Left ventricle myocardium inferior (tissue), 1 donor: ENCODE measurements at regions of chr17 and their contacts with region 1.

Region 1: DNA sequence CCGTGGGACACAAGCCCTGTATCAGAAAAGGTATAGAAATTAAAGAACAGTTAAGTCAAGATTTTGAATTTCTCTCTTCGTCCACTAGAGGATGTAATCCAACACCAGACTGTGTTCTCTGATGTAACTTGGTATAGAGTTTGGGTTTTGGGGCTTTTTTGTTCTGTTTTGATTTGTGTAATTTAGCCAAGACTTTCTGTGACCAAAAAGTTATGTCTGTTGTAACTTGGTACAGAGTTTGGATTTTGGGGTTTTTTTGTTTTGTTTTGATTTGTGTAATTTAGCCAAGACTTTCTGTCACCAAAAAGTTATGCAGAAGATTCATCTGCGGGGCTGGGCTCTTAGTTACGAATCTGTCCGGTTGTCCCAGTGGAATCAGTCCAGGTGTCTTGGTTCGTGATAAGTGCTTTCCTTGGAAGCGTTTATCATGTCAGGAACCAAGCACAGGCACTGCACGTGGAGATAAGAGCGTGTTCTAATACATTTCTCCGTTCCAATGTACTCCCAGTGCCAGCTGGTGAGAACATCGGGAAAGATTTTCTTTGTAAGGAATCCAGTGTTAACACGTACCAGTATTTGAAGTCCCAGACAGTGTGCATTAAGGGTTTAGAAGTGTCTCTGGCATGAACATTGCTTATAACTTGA is 44.1 kb upstream of the SEC14L1 start:
- DNase-seq: no peak
- H3K4me3 ChIP-seq: peak overlapping the region; percentile 12
- H3K27ac ChIP-seq: peak overlapping the region; percentile 87
- H3K4me1 ChIP-seq: peaks cover 67% of the 10 kb centered on the region
- H3K27me3 ChIP-seq: no peaks in the 10 kb centered on the region
- CTCF ChIP-seq: peak; percentile 78

Region 2: DNA sequence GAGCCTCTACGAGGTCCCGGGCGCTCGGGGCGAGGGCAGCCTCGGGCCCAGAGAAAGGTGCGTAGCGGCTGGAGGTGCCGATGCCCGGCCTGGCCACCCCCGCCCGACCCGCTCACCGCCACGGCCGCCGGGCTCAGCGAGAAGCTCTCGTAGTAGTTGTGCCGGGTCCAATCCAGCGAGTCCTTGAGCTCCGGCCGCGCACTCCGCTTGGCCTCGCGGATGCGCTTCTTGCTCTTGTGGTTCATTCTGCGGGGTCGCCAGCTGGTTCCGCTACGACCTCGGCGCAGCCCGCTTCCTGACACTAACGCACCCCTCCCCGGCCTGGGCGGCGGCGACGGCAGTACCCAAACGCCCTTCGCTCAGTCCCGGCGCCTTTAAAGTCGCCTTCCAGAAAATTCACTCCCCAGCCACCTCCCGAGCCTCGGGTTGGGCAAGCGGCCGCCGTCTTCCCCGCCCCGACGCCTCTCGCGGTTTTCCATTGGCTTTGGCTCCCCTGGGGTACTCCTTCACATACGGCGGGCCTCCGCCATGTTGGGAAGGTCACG is 370.4 kb before region 1 on chr17 and contains the start of gene JMJD6:
- intact Hi-C with region 1: no loop called
- DNase-seq: peak; percentile 96
- H3K4me3 ChIP-seq: peak within 1 kb of the TSS; percentile 94
- H3K27ac ChIP-seq: peak within 1 kb of the TSS; percentile 98
- H3K4me1 ChIP-seq: peaks cover 86% of the 10 kb centered on the region
- H3K27me3 ChIP-seq: no peaks in the 10 kb centered on the region
- CTCF ChIP-seq: no peak
- total RNA-seq, gene JMJD6: 65.2 TPM

Region 3: GRCh38 chr17:77136420-77136767 is 39.7 kb after region 1 on chr17:
- intact Hi-C with region 1: loop called (anchors 5 kb)
- DNase-seq: no peak
- H3K4me3 ChIP-seq: no peak overlapping the region
- H3K27ac ChIP-seq: peak overlapping the region; percentile 92
- H3K4me1 ChIP-seq: peaks cover 73% of the 10 kb centered on the region
- H3K27me3 ChIP-seq: no peaks in the 10 kb centered on the region
- CTCF ChIP-seq: no peak

Region 4: DNA sequence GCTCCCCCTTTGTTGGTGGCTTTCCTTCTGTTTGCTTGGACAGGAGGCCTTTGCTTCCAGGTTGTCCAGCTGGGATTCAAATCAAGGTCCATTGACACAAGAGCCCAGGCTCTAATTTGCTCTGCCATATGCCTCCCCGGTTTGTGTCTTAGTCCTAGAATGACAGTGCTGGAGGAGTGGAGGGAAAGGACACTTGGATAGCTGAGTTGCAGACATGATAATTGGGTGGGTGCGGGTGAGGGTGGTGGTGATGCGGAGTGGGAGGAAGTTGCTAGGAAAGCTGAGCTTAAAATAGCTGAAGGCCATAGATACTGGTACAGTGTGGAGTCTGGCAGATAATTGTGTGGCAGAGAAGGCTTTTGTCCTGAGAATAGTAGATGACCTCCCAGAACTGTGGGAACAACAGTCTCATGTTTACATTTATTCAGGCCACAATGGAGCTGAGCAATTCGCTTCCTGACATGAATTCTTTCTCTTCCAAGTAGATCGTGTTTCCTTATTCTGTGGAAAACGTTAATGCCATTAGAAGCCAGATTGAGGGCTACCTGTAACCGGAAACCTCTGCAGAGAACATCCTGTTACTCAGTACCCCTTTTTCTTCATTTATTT is 67.9 kb after region 1 on chr17:
- intact Hi-C with region 1: no loop called
- DNase-seq: no peak
- H3K4me3 ChIP-seq: peak overlapping the region; percentile 39
- H3K27ac ChIP-seq: peak overlapping the region; percentile 83
- H3K4me1 ChIP-seq: peaks cover 76% of the 10 kb centered on the region
- H3K27me3 ChIP-seq: no peaks in the 10 kb centered on the region
- CTCF ChIP-seq: no peak

Region 5: DNA sequence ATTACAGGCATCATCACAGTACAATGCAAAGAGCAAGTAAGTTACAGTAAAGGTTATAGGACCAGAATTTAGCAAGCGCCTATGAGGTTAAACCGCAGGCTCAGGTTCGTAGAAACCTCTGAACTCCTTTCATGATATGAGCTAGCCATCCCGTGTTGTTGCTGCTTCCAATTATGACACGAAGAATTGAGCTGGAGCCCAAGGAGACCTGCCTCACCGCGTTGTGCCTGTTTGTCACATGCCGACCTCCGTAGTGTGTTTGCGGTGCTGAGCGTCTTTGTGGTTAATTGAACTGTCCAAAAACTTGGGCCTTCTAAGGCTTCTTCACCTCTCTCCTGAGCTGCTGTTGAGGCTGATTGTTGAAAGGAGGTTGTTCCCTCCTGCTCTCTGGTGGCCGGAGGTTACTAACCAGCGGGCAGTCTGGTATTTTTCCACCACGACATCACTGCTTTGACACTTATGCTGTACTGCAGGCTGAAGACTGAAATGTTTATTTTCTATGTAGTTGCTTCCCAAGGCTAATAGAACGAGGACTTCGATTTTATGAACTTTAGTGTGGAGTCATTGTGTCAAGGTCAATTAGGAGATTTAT is 111.6 kb after region 1 on chr17:
- intact Hi-C with region 1: loop called (anchors 10 kb)
- DNase-seq: no peak
- H3K4me3 ChIP-seq: peak overlapping the region; percentile 1
- H3K27ac ChIP-seq: peak overlapping the region; percentile 64
- H3K4me1 ChIP-seq: peaks cover 97% of the 10 kb centered on the region
- H3K27me3 ChIP-seq: no peaks in the 10 kb centered on the region
- CTCF ChIP-seq: peak; percentile 51

Region 6: GRCh38 chr17:77287432-77288071 is 190.9 kb after region 1 on chr17:
- intact Hi-C with region 1: no loop called
- DNase-seq: peak; percentile 54
- H3K4me3 ChIP-seq: peak overlapping the region; percentile 8
- H3K27ac ChIP-seq: peak overlapping the region; percentile 93
- H3K4me1 ChIP-seq: peaks cover 31% of the 10 kb centered on the region
- H3K27me3 ChIP-seq: peaks cover 31% of the 10 kb centered on the region
- CTCF ChIP-seq: no peak

Region 7: GRCh38 chr17:77297693-77298666 is 201.3 kb after region 1 on chr17:
- intact Hi-C with region 1: no loop called
- DNase-seq: no peak
- H3K4me3 ChIP-seq: no peak overlapping the region
- H3K27ac ChIP-seq: no peak overlapping the region
- H3K4me1 ChIP-seq: no peaks in the 10 kb centered on the region
- H3K27me3 ChIP-seq: no peaks in the 10 kb centered on the region
- CTCF ChIP-seq: no peak